ENCODE measurements at regions of chr12 and their contacts with region 1.

Region 1: DNA sequence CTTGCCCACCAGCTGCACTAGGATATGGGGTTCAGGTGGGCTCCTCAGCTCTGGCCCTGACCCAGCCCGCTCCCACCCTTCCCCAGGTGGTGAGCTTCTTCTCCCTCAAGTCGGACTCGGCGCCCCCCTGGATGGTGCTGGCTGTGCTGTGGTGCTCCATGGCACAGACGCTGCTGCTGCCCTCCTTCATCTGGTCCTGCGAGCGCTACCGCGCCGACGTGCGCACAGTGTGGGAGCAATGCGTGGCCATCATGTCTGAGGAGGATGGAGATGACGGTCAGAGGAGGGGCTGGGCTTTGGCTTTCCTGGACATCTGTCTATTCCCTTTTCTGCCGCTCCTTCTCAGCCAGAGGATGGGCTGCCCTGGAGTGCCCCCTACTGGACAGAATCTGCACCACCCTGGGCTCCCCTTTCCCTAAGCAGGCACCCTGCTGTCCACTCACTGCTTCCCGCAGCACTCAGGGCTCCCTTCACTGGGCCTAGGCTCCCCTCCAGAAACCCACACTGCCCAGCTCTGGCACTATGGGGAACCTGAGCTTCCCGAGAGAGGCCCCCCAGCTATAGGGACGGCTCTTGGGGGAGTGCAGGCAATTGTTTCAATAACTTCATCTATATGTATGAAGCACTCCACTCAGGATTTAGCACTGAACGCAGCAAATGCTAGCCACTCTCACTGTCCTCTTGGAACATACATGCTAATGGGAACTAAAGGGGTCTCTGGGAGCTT is 2.6 kb upstream of the P3H3 start:
- DNase-seq: peak; percentile 85 to 94 (median 94)
- ATAC-seq: peak; percentile 56 to 58
- H3K4me3 ChIP-seq: no peak overlapping the region
- H3K27ac ChIP-seq: no peak overlapping the region
- H3K4me1 ChIP-seq: peaks cover 2% of the 10 kb centered on the region
- H3K27me3 ChIP-seq: no peaks in the 10 kb centered on the region

Region 2: DNA sequence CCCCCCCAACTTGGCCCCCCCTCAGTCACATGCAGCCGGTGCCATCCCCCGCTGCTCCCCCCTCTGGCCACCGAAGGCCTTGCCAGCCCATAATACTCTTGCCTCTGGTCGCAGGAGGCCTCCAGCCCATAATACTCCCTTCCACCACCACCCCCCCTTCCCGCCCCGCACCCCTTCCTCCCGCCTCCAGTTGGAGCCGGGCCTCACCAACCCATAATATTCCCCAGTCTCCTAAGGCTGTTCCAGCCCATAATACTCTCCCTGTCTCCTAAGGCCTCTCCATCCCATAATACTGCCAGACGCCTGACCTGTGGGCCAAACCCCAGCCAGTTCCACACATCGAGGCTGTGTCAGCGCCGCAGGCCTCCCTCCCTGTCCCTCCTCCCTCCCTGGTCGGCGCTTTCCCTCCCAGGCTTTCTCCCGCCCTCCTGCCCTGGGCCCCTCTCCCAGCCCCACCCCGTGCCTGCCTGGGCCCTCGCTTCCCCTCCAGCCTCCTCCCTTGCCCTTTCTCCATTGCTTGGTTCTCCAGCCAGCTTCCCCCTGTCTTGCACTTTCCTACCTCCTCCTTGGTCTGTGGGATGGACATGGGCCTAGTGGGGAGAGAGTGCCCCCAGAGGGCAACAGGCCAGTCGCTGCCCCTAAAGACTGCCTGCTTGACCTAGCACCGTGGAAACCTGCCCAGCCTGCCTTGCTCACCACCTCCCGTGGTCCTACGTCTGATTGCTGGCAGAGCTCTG is 211.6 kb before region 1 on chr12:
- intact Hi-C with region 1: loop called in 1 of 4 experiments (anchors 10 kb)
- DNase-seq: peak; percentile 94 to 97 (median 96)
- ATAC-seq: peak; percentile 91 to 93
- H3K4me3 ChIP-seq: no peak overlapping the region
- H3K27ac ChIP-seq: peak overlapping the region; percentile 94
- H3K4me1 ChIP-seq: peaks cover 19% of the 10 kb centered on the region
- H3K27me3 ChIP-seq: no peaks in the 10 kb centered on the region

Region 3: DNA sequence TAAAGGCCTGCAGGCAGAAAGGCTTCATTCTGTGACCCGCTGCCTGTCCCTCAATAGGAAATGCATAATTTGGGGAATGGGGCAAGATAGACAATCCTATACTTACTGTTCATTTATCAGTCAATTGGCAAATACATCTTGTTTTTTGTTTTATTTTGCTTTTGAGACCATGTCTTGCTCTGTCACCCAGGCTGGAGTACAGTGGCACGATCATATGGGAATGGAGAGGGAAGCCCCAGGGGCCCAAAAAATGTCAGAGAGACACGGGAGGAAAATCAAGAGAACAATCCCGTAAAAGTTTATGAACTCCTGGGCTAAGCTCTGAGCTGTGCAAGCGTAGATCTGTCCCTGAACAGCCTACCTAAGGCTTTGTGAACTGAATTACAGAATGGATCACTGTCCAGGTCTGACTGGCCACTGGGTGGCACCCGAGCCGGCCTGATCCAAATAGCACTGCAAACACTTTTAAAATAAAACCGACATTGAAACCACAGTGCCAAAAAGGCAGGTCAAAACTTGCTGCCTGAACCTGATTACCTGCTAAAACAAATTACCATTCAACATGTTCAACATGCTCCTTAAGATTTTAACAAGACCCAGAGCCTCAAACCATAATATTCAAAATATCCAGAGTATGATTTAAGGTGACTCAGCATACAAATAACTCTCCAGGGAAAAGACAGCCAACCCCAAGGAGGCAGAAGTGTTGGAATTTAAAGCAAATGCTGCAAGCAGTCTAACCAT is 89.9 kb before region 1 on chr12:
- intact Hi-C with region 1: loop called in 1 of 4 experiments (anchors 5 kb)
- DNase-seq: peak; percentile 58 to 90 (median 85)
- ATAC-seq: peak; percentile 88 to 91
- H3K4me3 ChIP-seq: no peak overlapping the region
- H3K27ac ChIP-seq: no peak overlapping the region
- H3K4me1 ChIP-seq: no peaks in the 10 kb centered on the region
- H3K27me3 ChIP-seq: no peaks in the 10 kb centered on the region

Region 4: GRCh38 chr12:6752921-6753771 is 72.4 kb before region 1 on chr12 and contains the start of gene MLF2:
- intact Hi-C with region 1: loop called (anchors 2 to 10 kb)
- DNase-seq: peak; percentile 99
- ATAC-seq: peak; percentile 97
- H3K4me3 ChIP-seq: peak within 1 kb of the TSS; percentile 96
- H3K27ac ChIP-seq: peak within 1 kb of the TSS; percentile 98
- H3K4me1 ChIP-seq: no peaks in the 10 kb centered on the region
- H3K27me3 ChIP-seq: no peaks in the 10 kb centered on the region
- total RNA-seq, gene MLF2: 123 to 135 (median 130) TPM

Measured in right cardiac atrium (tissue), 5 donors.